HCT116 (cell line): ENCODE measurements at regions of chr3 and their contacts with region 1.

Region 1: GRCh38 chr3:98522244-98523090 is at the start of gene CLDND1:
- DNase-seq: peak; percentile 97
- ATAC-seq: peak; percentile 94
- H3K4me3 ChIP-seq: peak within 1 kb of the TSS; percentile 67 to 78
- H3K27ac ChIP-seq: peak within 1 kb of the TSS; percentile 86
- H3K4me1 ChIP-seq: peaks cover 36 to 60% of the 10 kb centered on the region in 2 experiments
- H3K27me3 ChIP-seq: no peaks in the 10 kb centered on the region
- CTCF ChIP-seq: no peak
- POLR2A ChIP-seq: peak; percentile 74
- RAD21 ChIP-seq: 0 out of 2 replicates have a peak, but pooled peaks have one; percentile 5
- total RNA-seq, gene CLDND1: 472 TPM

Region 2: GRCh38 chr3:98259707-98260106 is 262.8 kb before region 1 on chr3:
- CTCF ChIA-PET with region 1: no interaction called
- POLR2A ChIA-PET with region 1: no interaction called
- RAD21 ChIA-PET with region 1: no interaction called
- intact Hi-C with region 1: no loop called
- DNase-seq: peak; percentile 6
- ATAC-seq: peak; percentile 84
- H3K4me3 ChIP-seq: no peak overlapping the region
- H3K27ac ChIP-seq: no peak overlapping the region
- H3K4me1 ChIP-seq: no peaks in the 10 kb centered on the region
- H3K27me3 ChIP-seq: no peaks in the 10 kb centered on the region; the same call in 1 of the 2 replicates
- CTCF ChIP-seq: peak in 2 of 3 experiments; percentile 50 to 59; a peak in 4 of 6 replicates
- POLR2A ChIP-seq: no peak
- RAD21 ChIP-seq: no peak

Region 3: GRCh38 chr3:98395101-98395500 is 127.4 kb before region 1 on chr3:
- CTCF ChIA-PET with region 1: no interaction called
- POLR2A ChIA-PET with region 1: no interaction called
- RAD21 ChIA-PET with region 1: no interaction called
- intact Hi-C with region 1: no loop called
- DNase-seq: no peak
- ATAC-seq: no peak
- H3K4me3 ChIP-seq: no peak overlapping the region
- H3K27ac ChIP-seq: no peak overlapping the region
- H3K4me1 ChIP-seq: no peaks in the 10 kb centered on the region
- H3K27me3 ChIP-seq: no peaks in the 10 kb centered on the region
- CTCF ChIP-seq: no peak
- POLR2A ChIP-seq: no peak
- RAD21 ChIP-seq: no peak

Region 4: DNA sequence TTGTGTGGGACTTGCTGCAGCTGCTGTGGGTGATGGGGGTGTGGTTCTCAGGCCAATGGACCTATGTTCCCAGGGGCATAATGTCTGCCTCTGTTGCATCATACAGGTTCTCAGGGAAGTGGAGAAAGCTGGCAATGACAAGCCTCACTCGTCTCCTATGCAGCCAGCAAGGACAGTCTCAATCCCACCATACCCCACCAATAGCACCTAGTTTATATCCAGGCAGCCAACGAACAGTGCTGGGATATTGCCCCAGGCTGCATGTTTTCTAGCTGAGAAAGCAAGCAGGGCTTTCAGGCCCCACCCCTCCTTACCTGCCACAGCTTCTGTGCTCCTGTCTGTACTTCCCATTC is 39.4 kb before region 1 on chr3:
- CTCF ChIA-PET with region 1: no interaction called
- POLR2A ChIA-PET with region 1: interaction called, 12 read pairs
- RAD21 ChIA-PET with region 1: interaction called in 1 of 2 experiments, 3 read pairs
- intact Hi-C with region 1: no loop called
- DNase-seq: peak; percentile 67
- ATAC-seq: peak; percentile 93
- H3K4me3 ChIP-seq: peak overlapping the region in 1 of 2 experiments; percentile 10; a peak in 1 of 4 replicates
- H3K27ac ChIP-seq: peak overlapping the region; percentile 55
- H3K4me1 ChIP-seq: peaks cover 19 to 21% of the 10 kb centered on the region in 2 experiments
- H3K27me3 ChIP-seq: no peaks in the 10 kb centered on the region
- CTCF ChIP-seq: no peak
- POLR2A ChIP-seq: no peak
- RAD21 ChIP-seq: no peak

Region 5: DNA sequence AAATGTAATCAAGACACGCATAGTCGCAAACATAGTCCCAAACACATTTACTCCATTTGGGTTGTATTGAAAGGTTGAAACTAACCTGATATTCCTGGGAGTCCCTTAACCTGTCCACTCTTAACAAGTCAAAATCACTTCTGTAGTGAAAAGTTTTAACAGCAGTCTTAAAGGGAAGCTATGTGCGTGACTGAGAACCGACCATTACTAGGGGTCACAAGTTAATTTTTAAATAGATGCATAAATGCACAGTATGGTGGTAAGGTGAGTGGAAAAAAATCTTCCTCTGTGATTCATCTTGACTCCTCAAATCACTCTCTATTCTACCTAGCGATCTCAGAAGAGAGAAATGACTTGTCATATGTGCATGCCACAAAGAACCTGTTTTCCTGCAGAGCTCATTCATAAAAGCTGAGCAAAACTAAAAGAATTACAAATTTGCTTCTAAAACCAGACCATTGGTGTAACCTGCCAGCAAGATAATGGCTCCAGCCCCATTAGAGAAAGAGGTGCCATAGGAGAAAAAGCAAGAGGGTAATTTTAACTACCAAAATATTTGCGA is 14.1 kb after region 1 on chr3:
- CTCF ChIA-PET with region 1: interaction called, 3 read pairs
- POLR2A ChIA-PET with region 1: interaction called, 17 read pairs
- RAD21 ChIA-PET with region 1: no interaction called
- intact Hi-C with region 1: no loop called
- DNase-seq: no peak
- ATAC-seq: peak; percentile 39
- H3K4me3 ChIP-seq: peak overlapping the region; percentile 23 to 27
- H3K27ac ChIP-seq: peak overlapping the region; percentile 91
- H3K4me1 ChIP-seq: peaks cover 76 to 91% of the 10 kb centered on the region in 2 experiments
- H3K27me3 ChIP-seq: no peaks in the 10 kb centered on the region
- CTCF ChIP-seq: no peak
- POLR2A ChIP-seq: no peak
- RAD21 ChIP-seq: no peak

Region 6: GRCh38 chr3:98556164-98557130 is 34.0 kb after region 1 on chr3:
- CTCF ChIA-PET with region 1: no interaction called
- POLR2A ChIA-PET with region 1: interaction called, 11 read pairs
- RAD21 ChIA-PET with region 1: interaction called in 1 of 2 experiments, 5 read pairs
- intact Hi-C with region 1: no loop called
- DNase-seq: peak; percentile 93
- ATAC-seq: peak; percentile 75
- H3K4me3 ChIP-seq: peak overlapping the region; percentile 12 to 40
- H3K27ac ChIP-seq: peak overlapping the region; percentile 98
- H3K4me1 ChIP-seq: peaks cover 71 to 84% of the 10 kb centered on the region in 2 experiments
- H3K27me3 ChIP-seq: no peaks in the 10 kb centered on the region
- CTCF ChIP-seq: no peak
- POLR2A ChIP-seq: peak; percentile 34
- RAD21 ChIP-seq: 0 out of 2 replicates have a peak, but pooled peaks have one; percentile 17

Region 7: GRCh38 chr3:98561727-98562521 is 39.5 kb after region 1 on chr3:
- CTCF ChIA-PET with region 1: no interaction called
- POLR2A ChIA-PET with region 1: interaction called, 11 read pairs
- RAD21 ChIA-PET with region 1: interaction called, 3 to 5 read pairs
- intact Hi-C with region 1: no loop called
- DNase-seq: no peak
- ATAC-seq: peak; percentile 41
- H3K4me3 ChIP-seq: peak overlapping the region in 1 of 2 experiments; percentile 7; a peak in 1 of 4 replicates
- H3K27ac ChIP-seq: peak overlapping the region; percentile 83
- H3K4me1 ChIP-seq: peaks cover 78 to 86% of the 10 kb centered on the region in 2 experiments
- H3K27me3 ChIP-seq: no peaks in the 10 kb centered on the region
- CTCF ChIP-seq: no peak
- POLR2A ChIP-seq: no peak
- RAD21 ChIP-seq: no peak

Region 8: GRCh38 chr3:98588065-98588464 is 65.6 kb after region 1 on chr3:
- CTCF ChIA-PET with region 1: no interaction called
- POLR2A ChIA-PET with region 1: interaction called, 3 read pairs
- RAD21 ChIA-PET with region 1: no interaction called
- intact Hi-C with region 1: loop called (anchors 5 kb)
- DNase-seq: no peak
- ATAC-seq: no peak
- H3K4me3 ChIP-seq: no peak overlapping the region
- H3K27ac ChIP-seq: peak overlapping the region; percentile 93; the same call in 1 of the 2 replicates
- H3K4me1 ChIP-seq: peaks cover 75 to 91% of the 10 kb centered on the region in 2 experiments
- H3K27me3 ChIP-seq: no peaks in the 10 kb centered on the region
- CTCF ChIP-seq: peak; percentile 37 to 70 (median 64); a peak in 5 of 6 replicates
- POLR2A ChIP-seq: no peak
- RAD21 ChIP-seq: peak; percentile 64

Region 9: DNA sequence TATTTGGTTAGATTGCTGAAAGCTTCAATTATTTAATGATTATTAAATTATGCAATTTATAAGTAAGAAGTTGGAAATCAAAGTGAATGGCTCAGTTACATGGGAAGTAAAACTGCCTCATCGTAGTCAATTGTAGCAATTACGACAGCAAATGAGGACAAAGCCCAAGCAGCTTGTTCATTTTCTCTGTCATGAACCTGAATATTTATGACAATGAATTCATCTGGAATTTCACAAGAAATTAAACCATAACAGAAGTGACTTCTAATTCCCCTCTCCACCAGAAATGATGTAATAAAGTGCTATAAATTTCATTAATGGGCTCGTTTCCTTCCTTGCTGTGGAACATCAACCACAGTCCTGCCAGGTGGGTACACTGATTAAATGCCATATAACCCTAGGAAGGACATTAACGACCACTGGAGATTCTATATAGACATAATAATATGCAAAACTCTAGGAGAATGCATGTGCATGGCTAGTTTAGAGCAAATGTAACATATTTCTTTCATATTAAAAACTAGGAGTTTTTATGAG is 652.9 kb after region 1 on chr3:
- CTCF ChIA-PET with region 1: no interaction called
- POLR2A ChIA-PET with region 1: no interaction called
- RAD21 ChIA-PET with region 1: no interaction called
- intact Hi-C with region 1: no loop called
- DNase-seq: no peak
- ATAC-seq: no peak
- H3K4me3 ChIP-seq: no peak overlapping the region
- H3K27ac ChIP-seq: no peak overlapping the region
- H3K4me1 ChIP-seq: no peaks in the 10 kb centered on the region
- H3K27me3 ChIP-seq: no peaks in the 10 kb centered on the region
- CTCF ChIP-seq: no peak
- POLR2A ChIP-seq: no peak
- RAD21 ChIP-seq: no peak